ENCODE measurements at regions of chr22 and their contacts with region 1.

Region 1: GRCh38 chr22:35430897-35431322 is 31.0 kb downstream of the MCM5 start:
- DNase-seq: peak; percentile 84 to 98 (median 90)
- ATAC-seq: peak; percentile 93 to 99 (median 98)
- H3K4me3 ChIP-seq: no peak overlapping the region
- H3K27ac ChIP-seq: peak overlapping the region in 2 of 4 donors; percentile 60 to 62
- H3K4me1 ChIP-seq: peaks cover 0 to 4% (median 0%) of the 10 kb centered on the region in 3 donors
- H3K27me3 ChIP-seq: no peaks in the 10 kb centered on the region
- CTCF ChIP-seq: peak; percentile 95 to 99 (median 96)

Region 2: GRCh38 chr22:35489239-35489638 is 58.3 kb after region 1 on chr22:
- intact Hi-C with region 1: no loop called
- DNase-seq: peak in 1 of 6 donors; percentile 30
- ATAC-seq: no peak
- H3K4me3 ChIP-seq: no peak overlapping the region
- H3K27ac ChIP-seq: no peak overlapping the region
- H3K4me1 ChIP-seq: no peaks in the 10 kb centered on the region
- H3K27me3 ChIP-seq: no peaks in the 10 kb centered on the region
- CTCF ChIP-seq: no peak

Region 3: DNA sequence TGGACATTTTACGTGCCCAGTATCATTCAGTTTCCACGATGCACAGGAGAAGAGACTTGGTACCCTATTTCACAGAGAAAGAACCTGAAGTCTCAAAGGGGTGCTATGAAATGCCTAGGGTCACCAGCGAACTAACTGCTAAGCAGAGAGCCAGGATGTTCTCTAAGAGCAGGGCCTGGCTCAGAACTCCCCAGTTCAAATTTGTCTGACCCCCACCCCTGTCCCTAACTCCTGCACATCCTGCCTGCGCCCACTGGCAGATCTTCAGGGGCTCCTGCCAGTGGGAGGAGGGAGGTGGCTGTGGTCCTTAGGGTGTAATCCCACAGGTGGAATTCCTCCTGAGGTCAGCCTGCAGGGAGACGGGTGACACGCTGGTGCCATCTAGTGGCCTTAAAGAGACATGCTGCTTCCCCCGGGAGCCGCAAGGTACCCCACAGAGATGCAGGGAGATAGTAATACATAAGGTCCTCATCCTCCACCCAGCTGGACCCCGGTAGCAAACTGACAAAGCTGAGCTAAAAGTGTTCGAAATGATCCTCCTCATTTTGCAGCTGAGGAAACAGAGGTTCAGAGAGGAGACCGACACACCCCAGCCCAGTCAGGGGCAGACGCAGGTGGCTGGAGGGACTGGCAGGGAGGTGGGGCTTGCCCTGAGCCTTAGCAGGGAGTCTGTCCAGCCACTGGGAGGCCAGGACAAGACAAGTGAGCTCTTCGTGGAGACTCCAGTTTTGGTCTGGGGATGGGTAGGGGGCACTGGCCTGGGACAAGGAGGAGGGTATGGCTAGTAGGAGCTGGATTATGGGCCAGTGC is 152.2 kb after region 1 on chr22:
- intact Hi-C with region 1: loop called in 2 of 3 experiments (anchors 5 kb)
- DNase-seq: peak in 4 of 6 donors; percentile 45 to 73 (median 54)
- ATAC-seq: peak; percentile 81 to 95 (median 90)
- H3K4me3 ChIP-seq: no peak overlapping the region
- H3K27ac ChIP-seq: no peak overlapping the region
- H3K4me1 ChIP-seq: no peaks in the 10 kb centered on the region
- H3K27me3 ChIP-seq: no peaks in the 10 kb centered on the region
- CTCF ChIP-seq: peak; percentile 77 to 92 (median 88)

Region 4: DNA sequence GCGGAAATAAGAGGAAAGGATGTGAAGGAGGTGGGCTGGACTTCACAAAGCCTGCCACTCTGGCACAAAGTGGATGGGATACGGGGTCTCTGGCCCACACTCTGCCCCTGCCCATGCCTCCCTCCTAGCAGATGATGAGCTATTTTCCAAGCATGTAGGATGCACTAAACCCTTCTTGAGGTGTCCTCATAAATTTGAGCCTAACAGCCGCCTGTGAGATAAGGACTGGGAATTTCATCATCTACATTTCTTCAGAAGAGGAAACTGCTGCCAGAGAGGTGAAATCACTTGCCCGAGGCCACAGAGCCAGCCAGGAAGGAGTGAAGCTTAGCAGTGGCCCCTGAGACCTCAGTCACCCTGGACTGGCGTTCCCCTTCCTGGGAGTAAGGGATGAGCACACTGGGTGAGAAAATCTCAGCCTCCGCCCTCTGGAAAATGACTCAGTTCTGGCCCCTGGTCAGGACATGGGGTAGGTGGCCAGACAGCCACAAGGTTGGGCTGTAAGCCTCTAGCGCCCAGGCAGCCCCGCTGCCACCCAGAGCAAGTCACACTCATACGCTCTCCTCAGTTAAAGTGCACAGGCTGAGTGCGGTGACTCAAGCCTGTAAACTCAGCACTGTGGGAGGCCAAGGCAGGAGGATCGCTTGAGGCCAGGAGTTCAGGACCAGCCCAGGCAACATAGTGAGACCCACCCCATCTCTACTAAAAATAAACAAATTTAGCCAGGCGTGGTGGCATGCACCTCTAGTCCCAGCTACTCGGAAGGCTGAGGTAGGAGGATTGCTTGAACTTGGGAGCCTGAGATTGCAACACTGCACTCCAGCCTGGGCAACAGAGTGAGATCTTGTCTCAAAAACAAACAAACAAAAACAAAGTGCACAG is 158.4 kb after region 1 on chr22:
- intact Hi-C with region 1: loop called in 2 of 3 experiments (anchors 5 kb)
- DNase-seq: no peak
- ATAC-seq: peak in 3 of 4 donors; percentile 11 to 62 (median 51)
- H3K4me3 ChIP-seq: no peak overlapping the region
- H3K27ac ChIP-seq: no peak overlapping the region
- H3K4me1 ChIP-seq: no peaks in the 10 kb centered on the region
- H3K27me3 ChIP-seq: no peaks in the 10 kb centered on the region
- CTCF ChIP-seq: no peak

Region 5: GRCh38 chr22:35622191-35622913 is 191.4 kb after region 1 on chr22:
- intact Hi-C with region 1: loop called in 1 of 3 experiments (anchors 5 kb)
- DNase-seq: peak; percentile 26 to 82 (median 62)
- ATAC-seq: peak in 3 of 4 donors; percentile 33 to 48 (median 42)
- H3K4me3 ChIP-seq: no peak overlapping the region
- H3K27ac ChIP-seq: peak overlapping the region in 2 of 4 donors; percentile 33 to 46
- H3K4me1 ChIP-seq: peaks cover 0 to 13% (median 0%) of the 10 kb centered on the region in 3 donors
- H3K27me3 ChIP-seq: no peaks in the 10 kb centered on the region
- CTCF ChIP-seq: no peak

Measured in pancreas (tissue), 10 donors.